KBM-7 (cell line): ENCODE measurements at regions of chr11 and their contacts with region 1.

Region 1: DNA sequence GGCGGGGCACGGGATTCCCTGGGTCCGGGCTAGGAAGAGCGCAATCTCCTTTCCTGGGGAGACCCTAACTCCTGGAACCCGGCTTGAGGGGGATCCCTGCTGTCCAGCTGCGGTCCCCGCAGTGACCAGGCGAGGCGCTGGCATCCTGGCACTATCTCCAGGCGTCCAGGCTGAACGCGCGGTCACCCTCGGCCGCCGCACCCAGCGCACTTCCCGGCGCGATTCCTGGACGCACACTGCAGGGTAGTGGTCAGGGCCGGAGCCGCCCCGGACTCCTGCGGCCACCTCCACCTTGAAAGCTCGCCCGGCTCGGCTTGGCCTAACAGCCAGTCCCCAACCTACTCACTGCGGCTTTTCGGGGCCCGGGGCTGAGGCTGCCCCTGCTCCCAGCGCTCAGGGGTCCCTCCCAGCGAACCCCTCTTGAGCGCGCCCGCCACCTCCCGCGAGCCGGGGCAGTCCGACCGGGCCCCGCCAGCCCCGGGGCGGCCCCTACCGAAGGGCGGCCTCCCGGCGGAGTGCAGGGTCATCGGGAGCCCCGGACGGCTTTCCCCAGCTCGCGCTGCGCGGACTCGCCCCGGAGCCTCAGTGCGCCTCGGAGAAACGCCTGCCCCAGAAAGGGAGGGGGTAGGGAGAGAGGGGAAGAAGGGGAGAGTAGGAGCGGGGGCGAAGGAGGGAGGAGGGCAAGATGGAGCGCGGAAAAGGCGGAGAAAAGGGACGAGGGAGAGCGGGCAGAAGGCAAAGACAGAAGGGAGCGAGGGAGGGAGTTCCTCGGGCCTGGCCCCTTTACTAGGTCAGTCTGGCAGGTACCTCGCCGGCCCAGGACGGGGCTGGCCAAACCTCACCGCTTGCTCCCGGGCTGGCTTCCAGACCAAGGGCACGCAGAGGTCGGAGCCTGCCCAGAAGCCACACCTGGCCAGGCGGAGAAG is 1.0 kb downstream of the POU2AF3 start:
- DNase-seq: no peak

Region 2: DNA sequence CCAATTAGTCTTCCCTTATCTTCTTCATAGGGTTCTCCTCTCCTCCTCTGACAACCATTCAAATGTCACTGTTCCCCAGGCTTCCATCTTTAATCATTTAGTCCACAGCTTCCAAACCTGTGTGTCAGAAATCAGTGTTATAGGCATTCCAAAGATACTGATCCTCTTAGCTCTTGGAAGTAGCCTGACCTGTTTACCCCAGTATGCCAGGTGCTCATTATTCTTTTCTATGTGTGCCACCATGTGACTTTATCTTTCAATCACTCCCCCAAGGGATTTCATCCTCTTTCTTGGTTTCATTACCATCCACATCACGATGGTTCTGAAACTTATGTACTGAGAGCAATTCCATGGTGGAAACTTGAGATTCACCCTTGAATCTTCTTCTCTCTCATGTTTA is 46.2 kb before region 1 on chr11:
- in situ Hi-C with region 1: no loop called
- DNase-seq: no peak

Region 3: GRCh38 chr11:111422494-111423249 is 123.3 kb after region 1 on chr11:
- in situ Hi-C with region 1: loop called (anchors 25 kb)
- DNase-seq: no peak

Region 4: DNA sequence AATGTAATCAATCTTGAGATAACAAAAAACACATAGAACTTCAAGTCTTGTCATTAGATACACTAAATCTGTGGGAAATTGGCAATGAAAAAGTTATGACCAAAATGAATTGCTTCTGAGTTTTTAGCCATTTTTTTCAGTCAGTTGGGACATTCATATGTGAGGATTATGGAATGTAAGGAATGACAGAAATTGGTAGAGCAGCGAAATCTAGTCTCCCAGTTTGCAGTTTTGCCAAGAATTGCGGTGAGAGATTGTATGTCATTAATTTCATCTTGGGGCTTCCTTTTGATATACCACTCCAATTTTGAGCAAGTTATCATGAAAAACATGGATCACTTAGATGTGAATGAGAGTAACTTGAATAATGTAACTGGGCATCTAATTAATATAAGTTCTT is 352.8 kb after region 1 on chr11:
- in situ Hi-C with region 1: no loop called
- DNase-seq: no peak